PC-9 (cell line): ENCODE measurements at regions of chr5 and their contacts with region 1.

Region 1: GRCh38 chr5:90866333-90866732 is 307.7 kb downstream of the ADGRV1 start:
- DNase-seq: peak in 1 of 2 experiments; percentile 45
- H3K4me3 ChIP-seq: no peak overlapping the region
- H3K27ac ChIP-seq: no peak overlapping the region
- H3K4me1 ChIP-seq: no peaks in the 10 kb centered on the region
- H3K27me3 ChIP-seq: no peaks in the 10 kb centered on the region
- CTCF ChIP-seq: peak; percentile 78

Region 2: DNA sequence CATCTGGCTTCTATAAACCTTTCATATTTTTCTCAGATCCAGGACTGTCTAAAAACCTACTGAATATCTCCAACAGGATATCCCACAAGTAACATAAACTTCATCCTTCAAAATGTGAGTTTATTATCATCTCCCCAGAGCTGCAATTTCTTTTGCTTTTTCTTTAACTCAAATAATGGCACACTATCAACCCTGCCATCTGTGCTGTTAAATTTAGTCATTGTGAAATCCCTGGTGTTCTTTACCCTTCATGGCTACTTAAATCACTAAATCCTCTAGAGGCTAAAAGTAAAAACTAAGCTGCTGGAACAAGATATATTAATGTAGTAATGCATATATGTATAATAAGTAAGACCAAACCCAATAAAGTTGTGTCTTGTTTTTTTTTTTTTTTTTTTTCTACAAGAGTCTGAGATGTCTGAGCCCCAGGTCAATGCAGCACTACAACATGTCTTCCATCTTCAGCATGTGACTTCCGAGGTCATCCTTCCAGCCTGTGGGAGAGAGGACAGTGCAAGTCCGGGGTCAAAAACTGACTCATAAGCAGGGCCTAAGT is 55.2 kb after region 1 on chr5:
- CTCF ChIA-PET with region 1: no interaction called
- POLR2A ChIA-PET with region 1: no interaction called
- intact Hi-C with region 1: no loop called
- DNase-seq: no peak
- H3K4me3 ChIP-seq: no peak overlapping the region
- H3K27ac ChIP-seq: no peak overlapping the region
- H3K4me1 ChIP-seq: no peaks in the 10 kb centered on the region; the same call in 1 of the 2 replicates
- H3K27me3 ChIP-seq: no peaks in the 10 kb centered on the region
- CTCF ChIP-seq: no peak

Region 3: GRCh38 chr5:90932052-90932699 is 65.8 kb after region 1 on chr5:
- CTCF ChIA-PET with region 1: no interaction called
- POLR2A ChIA-PET with region 1: no interaction called
- intact Hi-C with region 1: loop called (anchors 2 kb)
- DNase-seq: peak; percentile 34 to 52
- H3K4me3 ChIP-seq: no peak overlapping the region
- H3K27ac ChIP-seq: peak overlapping the region; percentile 45
- H3K4me1 ChIP-seq: peaks cover 8% of the 10 kb centered on the region
- H3K27me3 ChIP-seq: no peaks in the 10 kb centered on the region
- CTCF ChIP-seq: peak; percentile 73

Region 4: GRCh38 chr5:91016954-91017700 is 150.8 kb after region 1 on chr5:
- CTCF ChIA-PET with region 1: no interaction called
- POLR2A ChIA-PET with region 1: no interaction called
- intact Hi-C with region 1: no loop called
- DNase-seq: no peak
- H3K4me3 ChIP-seq: no peak overlapping the region
- H3K27ac ChIP-seq: no peak overlapping the region
- H3K4me1 ChIP-seq: no peaks in the 10 kb centered on the region
- H3K27me3 ChIP-seq: no peaks in the 10 kb centered on the region
- CTCF ChIP-seq: no peak

Region 5: DNA sequence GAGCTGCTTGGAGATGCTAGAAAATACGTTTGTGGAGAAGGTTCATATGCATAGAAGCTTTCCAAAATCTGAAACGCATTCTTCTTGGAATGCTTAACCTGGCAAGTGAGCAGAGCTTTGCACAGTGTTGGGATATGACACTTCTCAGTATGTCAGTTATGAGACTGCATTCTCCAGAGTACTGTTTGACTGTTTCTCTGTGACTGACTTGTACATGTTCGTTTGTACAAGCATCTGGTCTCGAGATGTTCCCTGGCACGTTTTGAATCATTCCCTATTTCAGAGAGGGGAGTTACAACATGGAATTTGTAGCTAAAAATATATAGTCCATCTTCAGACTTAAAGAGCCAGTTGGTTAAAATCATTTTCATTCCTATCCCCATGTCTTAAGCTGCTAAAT is 244.4 kb after region 1 on chr5:
- CTCF ChIA-PET with region 1: no interaction called
- POLR2A ChIA-PET with region 1: no interaction called
- intact Hi-C with region 1: no loop called
- DNase-seq: no peak
- H3K4me3 ChIP-seq: no peak overlapping the region
- H3K27ac ChIP-seq: no peak overlapping the region
- H3K4me1 ChIP-seq: 0 out of 2 replicates have a peak, but pooled peaks cover 8% of the 10 kb centered on the region
- H3K27me3 ChIP-seq: no peaks in the 10 kb centered on the region
- CTCF ChIP-seq: no peak

Region 6: DNA sequence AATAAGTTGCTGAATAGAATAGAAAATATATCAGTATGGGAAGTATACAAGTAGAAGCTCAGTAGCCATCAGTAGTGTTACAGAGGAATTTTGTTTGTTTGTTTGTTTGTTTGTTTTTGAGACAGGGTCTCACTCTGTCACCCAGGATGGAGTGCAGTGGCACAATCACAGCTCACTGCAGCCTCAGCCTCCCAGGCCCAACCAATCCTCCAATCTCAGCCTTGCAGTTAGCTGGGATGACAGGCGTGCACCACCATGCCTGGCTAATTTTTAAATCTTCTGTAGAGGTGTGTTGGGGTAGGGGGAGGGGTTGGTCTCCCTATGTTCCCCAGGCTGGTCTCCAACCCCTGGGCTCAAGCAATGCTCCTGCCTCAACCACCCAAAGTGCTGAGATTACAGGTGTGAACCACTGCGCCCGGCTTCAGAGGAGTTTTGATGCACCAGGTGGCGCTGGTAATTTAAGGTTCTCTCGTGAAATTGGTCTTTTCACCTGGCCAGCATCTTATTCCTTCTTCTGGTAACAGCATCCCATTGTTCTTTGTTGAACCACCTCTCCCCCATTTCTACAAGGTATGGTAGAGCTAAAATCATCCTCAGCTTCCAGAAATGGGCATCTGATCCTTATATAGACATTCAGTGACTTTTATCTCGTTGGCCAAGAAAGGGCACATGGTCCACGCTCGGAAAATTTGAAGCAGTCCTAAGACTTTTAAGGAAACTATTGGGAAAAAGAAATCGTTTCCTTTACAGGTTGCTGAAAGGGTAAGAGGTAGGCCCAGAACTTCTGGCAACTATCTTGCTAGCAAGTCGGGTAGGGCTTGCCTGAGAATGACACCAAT is 359.7 kb after region 1 on chr5:
- CTCF ChIA-PET with region 1: no interaction called
- POLR2A ChIA-PET with region 1: no interaction called
- intact Hi-C with region 1: loop called (anchors 5 kb)
- DNase-seq: peak in 1 of 2 experiments; percentile 46
- H3K4me3 ChIP-seq: no peak overlapping the region
- H3K27ac ChIP-seq: no peak overlapping the region
- H3K4me1 ChIP-seq: no peaks in the 10 kb centered on the region
- H3K27me3 ChIP-seq: no peaks in the 10 kb centered on the region
- CTCF ChIP-seq: peak; percentile 65